ENCODE measurements at regions of chr17 and their contacts with region 1.

Region 1: GRCh38 chr17:5031365-5032082 is 3.7 kb downstream of the SLC52A1 start:
- H3K4me3 Mint-ChIP-seq: peak overlapping the region; percentile 72
- H3K27ac Mint-ChIP-seq: peak overlapping the region; percentile 97
- H3K4me1 Mint-ChIP-seq: peaks cover 54% of the 10 kb centered on the region
- H3K27me3 Mint-ChIP-seq: peaks cover 23% of the 10 kb centered on the region

Region 2: DNA sequence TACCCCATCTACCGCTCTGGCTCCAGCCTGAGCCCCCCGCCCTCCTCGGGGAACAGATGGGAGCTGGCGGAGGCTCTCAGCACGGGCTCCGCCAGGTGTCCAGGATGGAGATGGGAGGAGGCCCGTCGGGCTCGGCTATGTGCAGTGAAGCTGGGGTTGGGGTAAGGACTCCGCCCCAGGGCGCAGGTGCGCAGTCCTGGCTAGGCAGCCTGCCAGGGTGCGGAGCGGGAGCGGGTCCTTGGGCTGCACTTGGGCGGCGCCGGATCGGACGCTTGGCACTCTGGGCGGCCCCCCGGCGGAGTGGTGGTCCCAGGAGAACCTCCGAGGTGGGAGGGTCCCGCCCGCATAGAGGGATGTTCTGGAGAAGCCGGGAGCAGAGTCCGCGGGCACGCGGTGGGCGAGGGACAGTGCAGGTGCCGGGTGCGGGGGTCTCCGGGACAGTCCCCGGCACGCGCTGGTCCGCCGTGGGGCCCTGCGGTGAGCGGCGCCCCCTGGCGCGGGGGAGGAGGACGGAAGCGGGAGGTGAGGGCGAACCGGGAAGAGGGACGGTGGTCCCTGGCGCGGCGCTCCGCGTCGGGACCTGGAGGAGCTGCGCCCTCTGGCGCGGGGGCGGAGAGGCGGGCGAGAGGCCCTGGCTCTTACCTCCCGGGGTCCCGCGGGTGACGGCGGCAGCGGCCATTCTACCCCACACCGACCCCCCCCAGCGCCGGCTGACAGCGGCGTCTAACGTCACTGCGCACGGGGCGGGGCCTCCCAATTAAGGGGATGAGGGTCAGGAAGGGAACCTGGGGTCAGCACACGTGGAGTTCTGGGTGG is 44.4 kb before region 1 on chr17 and contains the start of gene CAMTA2:
- intact Hi-C with region 1: loop called (anchors 5 kb)
- H3K4me3 Mint-ChIP-seq: peak within 1 kb of the TSS; percentile 91
- H3K27ac Mint-ChIP-seq: peak within 1 kb of the TSS; percentile 93
- H3K4me1 Mint-ChIP-seq: peaks cover 62% of the 10 kb centered on the region
- H3K27me3 Mint-ChIP-seq: no peaks in the 10 kb centered on the region